ENCODE measurements at regions of chr2 and their contacts with region 1.

Region 1: GRCh38 chr2:219229305-219230058 is at the starts of genes ANKZF1 and ATG9A:
- DNase-seq: peak; percentile 99 to 100
- H3K4me3 ChIP-seq: peak within 1 kb of the TSS; percentile 62 to 77
- H3K27ac ChIP-seq: peak within 1 kb of the TSS; percentile 93 to 96
- H3K4me1 ChIP-seq: peaks cover 5 to 44% (median 26%) of the 10 kb centered on the region in 4 donors
- H3K27me3 ChIP-seq: no peaks in the 10 kb centered on the region
- CTCF ChIP-seq: peak in 1 of 2 experiments; percentile 32

Region 2: DNA sequence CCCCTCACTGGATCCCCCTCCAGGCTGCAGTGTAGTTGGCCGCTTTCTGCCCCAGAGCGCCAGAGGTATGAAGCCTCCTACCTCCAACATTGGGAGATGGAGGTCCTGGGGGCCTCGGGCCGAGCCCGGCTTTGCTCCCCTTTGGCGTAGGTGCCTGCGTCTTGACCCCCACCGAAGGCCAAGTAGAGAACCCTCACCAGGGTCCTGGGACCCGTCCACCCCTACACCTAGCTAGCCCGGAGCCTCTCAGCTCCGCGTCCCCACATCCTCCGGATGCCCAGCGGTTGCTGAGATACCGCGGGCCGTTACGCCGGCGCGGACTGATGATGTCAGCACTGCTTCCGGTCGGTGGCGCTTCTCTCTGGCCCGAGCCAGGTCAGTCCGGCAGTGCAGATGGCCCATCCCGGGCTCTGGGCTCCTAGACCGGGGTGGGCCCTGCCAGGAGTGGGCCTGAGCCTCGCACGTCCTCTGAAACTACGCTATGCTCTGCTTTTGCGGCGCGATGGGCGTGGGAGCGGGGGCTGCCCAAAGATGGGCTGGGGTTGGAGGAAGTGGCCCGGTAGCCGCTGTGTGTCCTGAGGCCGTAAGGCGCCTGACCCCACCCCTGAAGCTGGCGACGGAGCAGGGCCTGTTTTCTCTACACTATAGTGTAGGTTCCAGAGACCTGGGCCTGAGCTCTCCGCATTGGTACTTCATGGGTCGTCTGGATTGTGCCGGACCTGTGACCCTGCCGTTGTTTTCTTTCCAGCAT is 15.8 kb after region 1 on chr2 and contains the starts of genes GLB1L and STK16:
- intact Hi-C with region 1: loop called (anchors 2 kb)
- DNase-seq: peak; percentile 91 to 97
- H3K4me3 ChIP-seq: peak within 1 kb of the TSS; percentile 67 to 95
- H3K27ac ChIP-seq: peak within 1 kb of the TSS; percentile 92 to 99
- H3K4me1 ChIP-seq: peaks cover 0 to 49% (median 44%) of the 10 kb centered on the region in 4 donors
- H3K27me3 ChIP-seq: no peaks in the 10 kb centered on the region
- CTCF ChIP-seq: peak in 1 of 2 experiments; percentile 9

Region 3: GRCh38 chr2:219306047-219306446 is 76.6 kb after region 1 on chr2:
- intact Hi-C with region 1: no loop called
- DNase-seq: no peak
- H3K4me3 ChIP-seq: no peak overlapping the region
- H3K27ac ChIP-seq: no peak overlapping the region
- H3K4me1 ChIP-seq: peaks cover 0 to 11% (median 2%) of the 10 kb centered on the region in 4 donors
- H3K27me3 ChIP-seq: peaks cover 3 to 68% of the 10 kb centered on the region in 2 donors
- CTCF ChIP-seq: no peak